ENCODE measurements at regions of chr1 and their contacts with region 1.

Region 1: DNA sequence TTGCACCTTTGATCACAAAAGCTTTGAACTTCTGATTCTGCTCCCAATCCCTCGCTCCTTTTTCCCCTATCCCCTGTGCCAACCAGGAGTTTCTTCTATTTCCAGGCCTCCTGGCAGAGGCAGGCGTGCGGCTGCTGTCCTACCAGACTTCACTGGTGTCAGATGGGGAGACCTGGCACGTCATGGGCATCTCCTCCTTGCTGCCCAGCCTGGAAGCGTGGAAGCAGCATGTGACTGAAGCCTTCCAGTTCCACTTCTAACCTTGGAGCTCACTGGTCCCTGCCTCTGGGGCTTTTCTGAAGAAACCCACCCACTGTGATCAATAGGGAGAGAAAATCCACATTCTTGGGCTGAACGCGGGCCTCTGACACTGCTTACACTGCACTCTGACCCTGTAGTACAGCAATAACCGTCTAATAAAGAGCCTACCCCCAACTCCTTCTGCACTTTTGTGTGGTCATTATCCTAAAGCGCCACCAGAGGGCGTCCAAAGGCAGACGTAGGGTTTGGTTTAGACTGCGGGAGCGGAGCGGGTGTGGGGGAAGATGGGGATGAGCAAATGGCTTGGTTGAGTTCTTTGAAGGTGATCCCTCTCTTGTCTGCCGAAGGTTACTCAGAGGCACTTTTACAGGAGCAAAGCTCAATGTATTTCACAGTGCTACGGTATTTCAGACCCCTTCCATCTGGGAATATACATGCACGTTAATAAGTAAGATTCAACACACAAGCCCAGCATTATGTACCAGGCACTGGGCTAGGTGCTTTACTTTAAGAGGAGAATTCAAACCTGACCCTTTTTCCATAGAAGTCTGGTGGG is 24.7 kb downstream of the HMGCS2 start:
- DNase-seq: peak; percentile 76
- ATAC-seq: peak; percentile 80
- H3K4me3 ChIP-seq: no peak overlapping the region
- H3K27ac ChIP-seq: peak overlapping the region; percentile 9
- H3K4me1 ChIP-seq: peaks cover 38% of the 10 kb centered on the region
- H3K27me3 ChIP-seq: no peaks in the 10 kb centered on the region; a peak in 1 of 5 replicates
- CTCF ChIP-seq: peak; percentile 95
- EP300 ChIP-seq: no peak
- POLR2A ChIP-seq: no peak; a peak in 1 of 4 replicates
- RAD21 ChIP-seq: peak; percentile 90

Region 2: DNA sequence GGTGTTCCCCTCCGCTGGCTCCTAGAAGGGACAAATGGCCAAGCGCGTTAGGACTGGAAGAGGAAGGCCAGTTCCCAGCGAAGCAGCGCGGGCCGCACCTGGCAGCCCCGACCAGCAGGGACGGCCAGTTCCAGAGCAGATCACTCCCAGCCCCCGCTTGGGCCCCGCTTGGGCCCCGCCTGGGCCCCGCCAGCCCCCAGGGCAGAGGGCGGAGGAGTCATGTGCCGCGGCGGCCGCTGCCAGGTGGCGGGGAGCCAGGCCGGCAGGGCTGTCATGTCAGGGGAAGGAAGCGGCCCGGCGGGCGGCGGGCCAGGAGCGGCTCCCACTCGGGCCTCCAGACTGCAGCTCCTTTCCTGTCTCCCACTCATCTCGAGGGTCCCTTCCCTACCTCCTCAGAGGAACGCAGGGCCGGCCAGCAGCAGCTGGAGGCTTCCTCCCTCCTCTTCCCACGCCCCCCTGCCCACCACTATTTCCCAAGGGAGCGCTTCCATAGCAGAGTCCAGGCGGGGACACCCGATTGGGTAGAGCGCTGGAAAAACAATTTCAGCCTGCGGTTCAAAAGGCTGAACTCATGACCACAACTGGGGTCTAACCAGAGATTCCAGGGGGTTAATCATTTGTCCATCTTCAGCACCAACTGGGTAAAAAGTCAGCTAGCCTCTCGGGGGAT is 112.4 kb before region 1 on chr1:
- CTCF ChIA-PET with region 1: no interaction called
- POLR2A ChIA-PET with region 1: no interaction called
- in situ Hi-C with region 1: no loop called
- intact Hi-C with region 1: no loop called
- DNase-seq: peak; percentile 88
- ATAC-seq: peak; percentile 94
- H3K4me3 ChIP-seq: peak overlapping the region; percentile 39 to 65 (median 43)
- H3K27ac ChIP-seq: peak overlapping the region; percentile 86
- H3K4me1 ChIP-seq: peaks cover 57% of the 10 kb centered on the region
- H3K27me3 ChIP-seq: no peaks in the 10 kb centered on the region
- CTCF ChIP-seq: 0 out of 2 replicates have a peak, but pooled peaks have one; percentile 5
- EP300 ChIP-seq: peak in 1 of 2 experiments; percentile 38; a peak in 1 of 4 replicates
- POLR2A ChIP-seq: peak; percentile 40 to 46; a peak in 3 of 4 replicates
- RAD21 ChIP-seq: 0 out of 2 replicates have a peak, but pooled peaks have one; percentile 30

Region 3: GRCh38 chr1:119766374-119766794 is 22.4 kb after region 1 on chr1:
- CTCF ChIA-PET with region 1: interaction called, 7 read pairs
- POLR2A ChIA-PET with region 1: interaction called, 27 read pairs
- in situ Hi-C with region 1: no loop called
- intact Hi-C with region 1: no loop called
- DNase-seq: peak; percentile 93
- ATAC-seq: peak; percentile 94
- H3K4me3 ChIP-seq: peak overlapping the region; percentile 20 to 41 (median 23); a peak in 4 of 6 replicates
- H3K27ac ChIP-seq: peak overlapping the region; percentile 75
- H3K4me1 ChIP-seq: peaks cover 73% of the 10 kb centered on the region
- H3K27me3 ChIP-seq: peaks cover 0 to 2% of the 10 kb centered on the region in 2 experiments; a peak in 1 of 5 replicates
- CTCF ChIP-seq: no peak
- EP300 ChIP-seq: peak; percentile 33 to 91; a peak in 3 of 4 replicates
- POLR2A ChIP-seq: 0 out of 4 replicates have a peak, but pooled peaks of 1 of the 2 experiments have one; percentile 37
- RAD21 ChIP-seq: no peak

Region 4: DNA sequence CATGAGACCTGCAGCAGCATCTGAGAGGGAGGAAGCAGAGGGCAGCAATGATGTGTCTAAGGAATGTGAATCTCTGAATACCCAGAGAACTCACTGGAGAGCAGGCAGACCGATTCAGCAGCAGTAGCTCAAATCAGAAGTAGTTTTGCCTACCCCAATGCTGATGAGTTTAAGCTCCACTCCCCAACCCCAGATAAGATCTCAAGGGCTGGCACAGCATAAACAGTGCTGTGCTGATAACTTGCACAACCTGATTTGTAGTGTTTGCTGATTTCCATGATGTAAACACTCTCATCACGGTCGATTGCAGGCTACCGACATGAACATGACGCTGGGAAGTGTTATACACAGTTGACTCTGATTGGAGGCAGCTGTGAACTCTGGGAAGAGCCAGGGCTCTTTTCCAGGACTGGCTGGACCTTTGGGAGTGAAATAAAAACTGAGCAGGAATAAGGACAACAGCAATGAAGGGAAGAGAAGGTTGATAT is 35.9 kb after region 1 on chr1:
- CTCF ChIA-PET with region 1: no interaction called
- POLR2A ChIA-PET with region 1: interaction called, 7 read pairs
- in situ Hi-C with region 1: no loop called
- intact Hi-C with region 1: loop called (anchors 2 kb)
- DNase-seq: no peak
- ATAC-seq: peak; percentile 72
- H3K4me3 ChIP-seq: peak overlapping the region; percentile 12 to 49 (median 39)
- H3K27ac ChIP-seq: peak overlapping the region; percentile 69
- H3K4me1 ChIP-seq: peaks cover 88% of the 10 kb centered on the region
- H3K27me3 ChIP-seq: no peaks in the 10 kb centered on the region
- CTCF ChIP-seq: no peak
- EP300 ChIP-seq: 0 out of 4 replicates have a peak, but pooled peaks of 1 of the 2 experiments have one; percentile 23
- POLR2A ChIP-seq: no peak
- RAD21 ChIP-seq: no peak

Region 5: GRCh38 chr1:119808972-119809550 is 65.1 kb after region 1 on chr1:
- CTCF ChIA-PET with region 1: interaction called, 19 read pairs
- POLR2A ChIA-PET with region 1: no interaction called
- in situ Hi-C with region 1: no loop called
- intact Hi-C with region 1: loop called (anchors 1 kb)
- DNase-seq: peak; percentile 47
- ATAC-seq: peak; percentile 92
- H3K4me3 ChIP-seq: no peak overlapping the region
- H3K27ac ChIP-seq: no peak overlapping the region
- H3K4me1 ChIP-seq: peaks cover 35% of the 10 kb centered on the region
- H3K27me3 ChIP-seq: peaks cover 3 to 7% of the 10 kb centered on the region in 2 experiments; a peak in 2 of 5 replicates
- CTCF ChIP-seq: peak; percentile 85
- EP300 ChIP-seq: no peak
- POLR2A ChIP-seq: no peak
- RAD21 ChIP-seq: peak; percentile 76

Region 6: DNA sequence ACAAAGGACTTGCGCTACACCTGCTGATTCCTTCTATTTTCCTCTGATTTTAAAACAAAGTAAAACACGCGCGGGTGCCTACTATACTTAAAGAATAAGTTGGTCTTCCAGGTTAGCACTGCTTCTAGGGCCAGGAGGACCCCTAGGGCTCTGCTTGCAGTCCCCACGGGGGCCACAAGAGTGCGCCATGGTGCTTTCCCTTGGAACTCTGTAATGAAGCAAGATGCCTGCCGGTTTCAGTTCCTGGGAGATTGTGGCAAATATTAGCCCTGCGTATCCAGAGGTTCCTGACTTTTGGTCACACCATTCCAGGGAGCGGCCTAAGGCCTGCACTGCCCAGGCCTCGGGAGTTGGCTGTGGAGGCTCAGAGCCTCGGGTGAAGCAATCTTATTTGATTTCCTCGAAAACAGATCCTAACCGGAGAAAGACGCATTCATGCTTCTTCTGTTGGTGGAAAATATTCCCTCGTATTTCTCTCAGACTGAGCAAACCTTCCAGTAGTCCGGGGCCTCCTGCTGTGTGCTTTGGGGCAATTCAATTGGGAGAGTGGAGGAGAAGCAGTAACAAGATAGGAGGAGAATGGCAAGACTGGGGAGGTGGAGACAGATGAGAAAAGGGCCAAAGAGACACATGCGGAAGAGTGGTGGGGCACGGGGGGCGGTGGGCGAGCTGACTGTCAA is 127.1 kb after region 1 on chr1:
- CTCF ChIA-PET with region 1: interaction called, 5 read pairs
- POLR2A ChIA-PET with region 1: no interaction called
- in situ Hi-C with region 1: no loop called
- intact Hi-C with region 1: loop called (anchors 1 kb)
- DNase-seq: peak; percentile 62
- ATAC-seq: peak; percentile 97
- H3K4me3 ChIP-seq: peak overlapping the region; percentile 51 to 71 (median 65); a peak in 5 of 6 replicates
- H3K27ac ChIP-seq: no peak overlapping the region
- H3K4me1 ChIP-seq: peaks cover 8% of the 10 kb centered on the region
- H3K27me3 ChIP-seq: 0 out of 5 replicates have a peak, but pooled peaks cover 1 to 8% of the 10 kb centered on the region in 2 experiments
- CTCF ChIP-seq: peak; percentile 90
- EP300 ChIP-seq: no peak
- POLR2A ChIP-seq: no peak
- RAD21 ChIP-seq: peak; percentile 89

Region 7: GRCh38 chr1:119895986-119896702 is 152.2 kb after region 1 on chr1 and contains the start of gene ADAM30:
- CTCF ChIA-PET with region 1: no interaction called
- POLR2A ChIA-PET with region 1: no interaction called
- in situ Hi-C with region 1: no loop called
- intact Hi-C with region 1: no loop called
- DNase-seq: no peak
- ATAC-seq: no peak
- H3K4me3 ChIP-seq: no peak within 1 kb of the TSS
- H3K27ac ChIP-seq: no peak within 1 kb of the TSS
- H3K4me1 ChIP-seq: peaks cover 42% of the 10 kb centered on the region
- H3K27me3 ChIP-seq: peaks cover 0 to 3% of the 10 kb centered on the region in 2 experiments; a peak in 1 of 5 replicates
- CTCF ChIP-seq: no peak
- EP300 ChIP-seq: no peak
- POLR2A ChIP-seq: no peak
- RAD21 ChIP-seq: no peak
- total RNA-seq, gene ADAM30: not detected in 2 replicates

Measured in HepG2 (cell line).